Psoas muscle (tissue), 8 donors: ENCODE measurements at regions of chr1 and their contacts with region 1.

Region 1: GRCh38 chr1:3283849-3284248 is 170.6 kb upstream of the ARHGEF16 start:
- DNase-seq: no peak
- ATAC-seq: peak; percentile 46 to 74 (median 60)
- H3K4me3 ChIP-seq: no peak overlapping the region
- H3K27ac ChIP-seq: no peak overlapping the region
- H3K4me1 ChIP-seq: no peaks in the 10 kb centered on the region
- H3K27me3 ChIP-seq: peaks cover 0 to 38% (median 2%) of the 10 kb centered on the region in 3 donors
- CTCF ChIP-seq: peak; percentile 70

Region 2: DNA sequence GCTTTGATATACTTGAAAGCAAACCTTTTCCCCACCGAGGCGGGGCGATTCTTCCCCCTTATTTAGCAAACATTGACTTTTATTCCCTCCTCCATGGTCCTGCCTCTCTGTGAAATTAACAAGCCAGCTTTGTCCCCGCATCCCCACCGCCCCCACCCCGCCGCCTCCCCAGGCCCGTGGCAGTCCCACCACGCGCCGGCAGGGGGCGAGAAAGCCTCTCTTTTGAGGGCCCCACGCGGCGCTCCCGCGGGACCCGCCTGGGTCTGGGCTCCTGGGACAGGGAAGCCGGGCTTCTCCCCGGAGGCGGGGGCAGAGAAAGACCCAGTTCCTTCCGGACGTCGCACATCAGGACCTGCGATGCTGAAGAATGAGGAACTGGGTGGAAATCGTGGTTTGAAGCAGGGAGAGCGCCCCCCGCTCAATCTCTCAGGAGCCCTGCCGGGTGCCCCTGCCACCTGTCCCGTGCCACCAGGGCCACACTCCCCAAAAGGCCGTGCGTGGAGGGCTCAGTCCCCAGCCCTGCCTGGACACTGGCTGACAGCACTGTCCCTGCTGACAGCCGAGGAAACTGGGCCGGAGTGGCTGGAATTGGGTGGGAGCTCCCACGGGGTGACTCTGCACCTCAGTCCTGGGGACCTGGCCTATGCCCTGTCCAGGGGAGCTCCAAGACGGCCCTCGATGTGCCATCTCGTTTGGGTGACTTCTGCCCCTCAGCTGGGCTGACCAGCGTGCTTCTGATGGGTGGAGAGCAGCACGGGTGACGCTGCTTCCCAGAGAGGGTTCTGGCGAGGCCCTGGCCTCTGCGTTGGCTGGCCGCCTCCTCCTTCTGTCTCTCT is 271.2 kb before region 1 on chr1:
- intact Hi-C with region 1: loop called (anchors 2 to 5 kb)
- DNase-seq: peak; percentile 57 to 73
- ATAC-seq: peak; percentile 69 to 86 (median 75)
- H3K4me3 ChIP-seq: no peak overlapping the region
- H3K27ac ChIP-seq: no peak overlapping the region
- H3K4me1 ChIP-seq: no peaks in the 10 kb centered on the region
- H3K27me3 ChIP-seq: peaks cover 0 to 77% (median 5%) of the 10 kb centered on the region in 3 donors
- CTCF ChIP-seq: peak; percentile 86

Region 3: DNA sequence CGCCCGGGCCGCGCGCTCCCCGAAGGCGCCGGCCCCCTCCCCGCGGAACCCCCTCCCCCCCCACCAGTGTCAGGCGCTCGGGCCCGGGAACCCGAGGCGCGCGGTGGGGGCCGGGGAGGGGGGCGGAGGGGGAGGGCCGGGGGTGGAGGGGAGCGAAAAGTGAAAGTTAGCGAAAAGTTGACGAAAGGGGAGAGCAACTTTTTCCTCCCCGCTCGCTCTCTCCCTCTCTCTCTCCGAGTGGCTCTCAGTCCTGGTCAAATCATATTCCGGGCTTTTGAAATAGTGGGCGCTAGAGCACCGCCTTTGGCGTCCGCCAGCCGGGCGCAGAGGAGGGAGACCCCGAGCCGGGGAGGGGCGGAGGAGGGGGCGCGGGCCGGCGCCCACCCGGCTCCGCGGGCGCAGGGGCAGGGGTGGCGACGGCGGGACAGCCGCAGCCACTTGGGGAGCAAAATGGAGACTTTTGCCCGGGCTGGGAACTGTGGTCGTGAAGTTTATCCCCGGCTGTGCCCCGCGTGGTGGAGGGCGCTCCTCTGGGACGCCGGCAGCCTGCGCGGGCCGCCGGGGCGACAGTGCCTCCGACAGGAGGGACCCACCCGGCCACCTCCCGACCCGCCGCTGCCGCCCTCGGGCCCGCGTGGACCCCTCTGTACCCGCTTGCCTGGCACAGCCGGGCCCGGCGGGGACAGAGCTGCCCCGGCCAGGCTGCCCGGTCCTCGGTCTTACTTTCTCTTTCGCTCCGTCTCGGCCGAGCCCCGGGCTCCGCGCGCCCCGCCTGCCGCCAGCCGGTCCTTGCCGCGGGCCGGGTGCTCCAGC is 214.2 kb before region 1 on chr1:
- intact Hi-C with region 1: loop called (anchors 5 kb)
- DNase-seq: peak; percentile 17 to 52
- ATAC-seq: peak in 3 of 4 donors; percentile 54 to 79 (median 67)
- H3K4me3 ChIP-seq: peak overlapping the region; percentile 78
- H3K27ac ChIP-seq: no peak overlapping the region
- H3K4me1 ChIP-seq: peaks cover 2% of the 10 kb centered on the region
- H3K27me3 ChIP-seq: peaks cover 0 to 87% (median 20%) of the 10 kb centered on the region in 3 donors
- CTCF ChIP-seq: peak; percentile 27

Region 4: DNA sequence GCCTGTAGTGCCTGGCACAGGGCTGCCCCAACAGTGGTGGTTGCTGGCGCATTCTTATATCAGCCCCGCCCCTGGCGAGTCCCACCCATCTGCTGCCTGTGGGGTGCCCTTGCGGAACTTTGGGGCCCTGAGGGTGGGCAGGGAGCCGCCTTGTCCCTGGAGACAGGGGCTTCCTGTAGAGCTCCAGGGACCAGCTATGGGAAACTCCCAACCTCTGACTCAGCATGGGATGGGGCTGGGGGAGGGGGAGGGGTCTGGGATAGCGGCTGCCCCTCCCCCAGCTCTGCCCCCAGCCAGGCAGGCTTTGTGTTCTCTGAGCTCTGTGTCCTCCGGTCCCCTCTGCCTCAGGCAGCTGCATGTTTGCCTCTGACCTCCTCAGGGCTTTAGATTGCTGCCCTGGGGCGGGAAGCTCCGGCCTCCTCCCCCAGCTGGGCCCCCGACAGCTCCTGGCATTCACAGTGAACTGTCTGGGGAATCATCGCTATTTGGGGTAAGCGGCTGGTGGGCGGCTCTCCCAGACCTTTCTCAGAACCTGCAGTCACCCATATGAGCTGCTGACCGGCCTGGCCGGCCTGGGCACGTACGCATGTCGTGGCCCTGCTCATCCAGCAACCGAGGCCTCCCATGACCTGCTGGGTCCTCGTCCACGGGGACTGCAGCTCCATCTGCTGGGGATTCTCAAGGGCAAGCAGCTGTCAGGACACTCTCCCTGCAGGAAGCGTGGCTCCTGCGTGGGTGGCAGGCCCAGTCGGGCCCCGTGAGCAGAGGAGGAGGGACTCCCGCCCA is 187.6 kb after region 1 on chr1:
- intact Hi-C with region 1: no loop called
- DNase-seq: peak; percentile 38 to 59
- ATAC-seq: peak; percentile 79 to 92 (median 85)
- H3K4me3 ChIP-seq: no peak overlapping the region
- H3K27ac ChIP-seq: no peak overlapping the region
- H3K4me1 ChIP-seq: peaks cover 10% of the 10 kb centered on the region
- H3K27me3 ChIP-seq: no peaks in the 10 kb centered on the region
- CTCF ChIP-seq: peak; percentile 57